ENCODE measurements at regions of chr6 and their contacts with region 1.

Region 1: DNA sequence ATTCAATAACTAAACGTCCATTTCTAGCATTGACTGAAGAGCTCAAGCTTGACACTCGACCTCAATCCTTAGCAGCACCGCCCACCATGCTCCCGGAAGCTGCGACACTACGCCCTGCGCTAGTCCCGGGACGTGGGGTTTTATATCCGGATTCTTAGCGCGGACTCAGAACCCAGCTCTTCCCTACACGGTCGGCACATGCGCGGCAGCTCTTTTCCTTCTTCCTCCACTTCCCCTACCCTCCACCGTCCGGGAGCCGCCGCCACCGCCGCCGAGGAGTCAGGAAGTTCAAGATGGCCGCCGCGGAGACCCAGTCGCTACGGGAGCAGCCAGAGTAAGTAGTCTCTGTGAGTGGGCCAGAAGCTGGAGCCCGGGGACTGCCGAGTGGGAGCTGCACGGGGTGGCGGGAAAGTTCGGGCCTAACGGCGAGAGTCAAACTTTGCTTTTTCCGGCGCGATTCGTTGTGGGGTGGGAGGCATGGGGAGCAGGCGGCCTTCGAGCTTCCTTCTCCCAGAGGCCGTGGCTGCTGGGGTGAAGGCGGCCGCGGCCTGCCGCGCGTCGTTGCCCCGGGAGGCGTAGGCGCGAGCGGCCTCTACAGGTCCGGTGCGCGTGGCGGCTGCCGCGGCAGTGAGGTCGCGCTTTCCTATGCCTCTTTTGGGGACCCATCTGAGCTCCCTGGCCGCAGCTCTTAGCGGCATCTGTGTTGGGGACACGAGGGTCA is 57.6 kb downstream of the FAM217A start:
- DNase-seq: peak; percentile 91
- H3K4me3 Mint-ChIP-seq: peak overlapping the region; percentile 95
- H3K27ac Mint-ChIP-seq: peak overlapping the region; percentile 98
- H3K4me1 Mint-ChIP-seq: peaks cover 60% of the 10 kb centered on the region
- H3K27me3 Mint-ChIP-seq: no peaks in the 10 kb centered on the region

Region 2: DNA sequence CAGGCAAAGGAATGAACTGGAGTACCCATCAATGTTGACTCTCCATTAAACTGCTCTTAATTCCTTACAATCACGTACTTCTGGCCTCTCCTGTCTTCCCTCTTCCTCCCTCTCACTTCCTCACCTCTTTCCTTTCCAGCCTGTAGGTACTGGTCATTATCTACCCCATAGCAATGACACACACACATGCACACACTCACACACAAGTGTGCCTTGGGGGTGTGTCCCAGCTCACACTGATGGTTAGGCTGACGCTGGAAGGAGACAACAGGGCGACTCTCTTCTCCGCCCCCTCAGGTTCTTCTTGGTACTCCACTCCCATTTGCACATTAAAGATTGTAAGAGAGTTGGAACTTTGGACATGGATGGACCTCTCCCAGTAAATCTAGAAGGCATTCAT is 1104.2 kb before region 1 on chr6:
- CTCF ChIA-PET with region 1: no interaction called
- POLR2A ChIA-PET with region 1: no interaction called
- DNase-seq: no peak
- H3K4me3 Mint-ChIP-seq: no peak overlapping the region
- H3K27ac Mint-ChIP-seq: no peak overlapping the region
- H3K4me1 Mint-ChIP-seq: peaks cover 18% of the 10 kb centered on the region
- H3K27me3 Mint-ChIP-seq: peaks cover under 1% of the 10 kb centered on the region

Region 3: GRCh38 chr6:4036581-4036980 is 15.3 kb after region 1 on chr6:
- CTCF ChIA-PET with region 1: interaction called, 10 read pairs
- POLR2A ChIA-PET with region 1: no interaction called
- DNase-seq: no peak
- H3K4me3 Mint-ChIP-seq: no peak overlapping the region
- H3K27ac Mint-ChIP-seq: no peak overlapping the region
- H3K4me1 Mint-ChIP-seq: peaks cover 43% of the 10 kb centered on the region
- H3K27me3 Mint-ChIP-seq: no peaks in the 10 kb centered on the region

Measured in activated CD4-positive, alpha-beta T cell treated with anti-CD3 and anti-CD28 coated beads, Interleukin-2, amount 10 ng/mL, durations not matched to agents 7 days and 5 days (primary cell).